Calu3 (cell line): ENCODE measurements at regions of chr6 and their contacts with region 1.

Region 1: GRCh38 chr6:52020945-52021570 is 66.4 kb downstream of the PKHD1 start:
- DNase-seq: no peak
- H3K4me3 Mint-ChIP-seq: no peak overlapping the region
- H3K27ac Mint-ChIP-seq: no peak overlapping the region
- H3K4me1 Mint-ChIP-seq: no peaks in the 10 kb centered on the region
- H3K27me3 Mint-ChIP-seq: no peaks in the 10 kb centered on the region
- CTCF ChIP-seq: peak; percentile 55

Region 2: GRCh38 chr6:51814418-51814817 is 206.6 kb before region 1 on chr6:
- CTCF ChIA-PET with region 1: no interaction called
- intact Hi-C with region 1: no loop called
- DNase-seq: no peak
- H3K4me3 Mint-ChIP-seq: no peak overlapping the region
- H3K27ac Mint-ChIP-seq: no peak overlapping the region
- H3K4me1 Mint-ChIP-seq: no peaks in the 10 kb centered on the region
- H3K27me3 Mint-ChIP-seq: no peaks in the 10 kb centered on the region
- CTCF ChIP-seq: no peak

Region 3: DNA sequence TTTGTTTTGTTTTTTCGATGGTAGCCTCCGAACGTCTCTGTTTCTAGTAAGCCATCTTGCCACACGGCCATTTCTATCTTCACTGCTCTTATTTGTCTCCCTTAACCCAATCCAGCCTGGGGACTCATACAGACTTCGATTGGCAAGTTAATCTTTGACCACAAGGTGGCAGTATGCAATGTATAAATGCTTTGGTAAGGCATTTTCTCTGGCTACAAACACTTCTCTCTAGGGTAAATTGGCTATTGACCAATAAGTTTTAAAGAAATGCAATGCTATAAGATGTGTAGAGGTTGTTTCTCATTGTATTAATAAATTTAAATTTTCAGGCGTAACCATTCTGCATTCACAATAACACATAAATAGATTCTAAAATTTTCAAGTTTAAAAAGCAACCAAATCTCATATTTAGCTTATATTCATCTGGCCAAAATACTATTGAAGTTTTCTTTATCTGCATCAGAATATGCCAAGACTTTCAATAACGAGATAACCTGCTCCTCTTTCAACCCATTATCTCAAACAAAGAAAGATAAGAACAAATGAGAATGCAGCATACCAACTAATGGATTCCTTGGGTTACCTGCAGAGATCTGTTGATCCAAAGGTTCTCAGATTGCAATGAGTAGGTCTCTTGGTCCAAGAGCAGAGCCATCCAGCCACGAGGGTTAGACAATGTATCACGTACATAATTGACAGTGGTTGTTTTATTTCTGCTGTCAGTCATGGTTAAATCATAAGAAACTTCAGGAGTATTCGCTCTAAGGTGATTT is 165.6 kb before region 1 on chr6:
- CTCF ChIA-PET with region 1: no interaction called
- intact Hi-C with region 1: loop called (anchors 1 kb)
- DNase-seq: peak; percentile 39
- H3K4me3 Mint-ChIP-seq: no peak overlapping the region
- H3K27ac Mint-ChIP-seq: no peak overlapping the region
- H3K4me1 Mint-ChIP-seq: peaks cover 8% of the 10 kb centered on the region
- H3K27me3 Mint-ChIP-seq: no peaks in the 10 kb centered on the region
- CTCF ChIP-seq: peak; percentile 67